ENCODE measurements at regions of chr17 and their contacts with region 1.

Region 1: GRCh38 chr17:77096570-77097214 is 44.1 kb upstream of the SEC14L1 start:
- DNase-seq: peak; percentile 75
- H3K4me3 ChIP-seq: peak overlapping the region; percentile 9; the same call in 1 of the 2 replicates
- H3K27ac ChIP-seq: peak overlapping the region; percentile 34
- H3K4me1 ChIP-seq: peaks cover 24% of the 10 kb centered on the region
- H3K27me3 ChIP-seq: no peaks in the 10 kb centered on the region

Region 2: DNA sequence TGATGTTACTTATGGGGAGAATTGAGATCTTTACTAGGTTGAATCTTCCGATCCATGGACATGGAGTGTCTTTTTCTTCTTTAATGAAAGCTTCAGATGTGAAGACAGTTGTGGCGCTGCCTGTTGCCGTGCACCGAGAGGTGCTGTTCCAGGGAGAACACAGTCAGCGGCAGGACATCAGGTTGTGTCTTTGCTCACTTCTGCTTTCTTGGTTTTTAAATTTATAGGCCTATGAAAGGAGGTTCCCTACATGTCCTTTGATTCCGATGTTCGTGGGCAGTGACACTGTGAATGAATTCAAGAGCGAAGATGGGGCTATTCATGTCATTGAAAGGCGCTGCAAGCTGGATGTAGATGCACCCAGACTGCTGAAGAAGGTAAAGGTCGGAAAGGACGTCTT is 93.9 kb after region 1 on chr17:
- in situ Hi-C with region 1: loop called (anchors 10 kb)
- DNase-seq: no peak
- H3K4me3 ChIP-seq: no peak overlapping the region
- H3K27ac ChIP-seq: no peak overlapping the region
- H3K4me1 ChIP-seq: peaks cover 1% of the 10 kb centered on the region
- H3K27me3 ChIP-seq: no peaks in the 10 kb centered on the region

Region 3: DNA sequence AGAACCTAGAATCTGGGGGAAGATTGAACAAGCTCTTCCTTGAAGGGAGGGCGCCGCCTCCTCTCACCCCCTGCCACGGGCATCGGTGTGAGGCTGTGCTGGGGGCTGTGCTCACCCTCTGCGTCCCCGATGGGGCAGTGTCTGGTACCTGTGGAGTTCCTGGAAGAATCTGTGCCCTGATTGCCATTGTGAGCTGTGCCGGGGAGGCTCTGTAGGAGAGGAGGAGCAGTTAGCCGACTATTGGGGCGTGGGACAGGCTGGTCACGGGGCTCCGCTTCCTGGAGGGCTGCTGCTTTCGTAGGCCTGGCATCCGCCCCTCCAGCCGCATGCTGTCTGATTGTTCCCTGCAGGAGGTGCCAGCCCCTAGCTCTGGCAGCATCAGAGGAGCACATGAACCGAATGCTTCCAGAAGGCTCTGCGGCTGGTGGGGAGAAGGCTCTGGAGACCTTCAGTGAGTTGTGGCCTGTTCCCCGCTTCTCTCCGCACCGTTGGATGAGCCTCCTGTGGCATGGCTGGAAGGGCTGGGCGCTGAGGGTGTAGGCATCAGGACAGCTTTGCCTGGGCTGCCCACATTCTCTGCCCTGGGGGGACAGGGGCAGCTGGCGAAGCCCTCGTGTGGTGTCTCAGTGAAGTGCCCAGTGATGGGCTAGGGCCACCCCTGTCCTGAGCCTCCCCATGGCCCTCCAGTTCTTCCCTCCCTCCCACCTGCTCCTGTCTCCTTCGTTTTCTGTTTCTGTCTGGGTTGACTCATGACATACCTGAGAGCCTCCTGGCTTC is 131.0 kb after region 1 on chr17:
- in situ Hi-C with region 1: loop called (anchors 10 kb)
- DNase-seq: peak; percentile 49
- H3K4me3 ChIP-seq: no peak overlapping the region
- H3K27ac ChIP-seq: no peak overlapping the region
- H3K4me1 ChIP-seq: no peaks in the 10 kb centered on the region
- H3K27me3 ChIP-seq: no peaks in the 10 kb centered on the region